Panc1 (cell line): ENCODE measurements at regions of chr9 and their contacts with region 1.

Region 1: DNA sequence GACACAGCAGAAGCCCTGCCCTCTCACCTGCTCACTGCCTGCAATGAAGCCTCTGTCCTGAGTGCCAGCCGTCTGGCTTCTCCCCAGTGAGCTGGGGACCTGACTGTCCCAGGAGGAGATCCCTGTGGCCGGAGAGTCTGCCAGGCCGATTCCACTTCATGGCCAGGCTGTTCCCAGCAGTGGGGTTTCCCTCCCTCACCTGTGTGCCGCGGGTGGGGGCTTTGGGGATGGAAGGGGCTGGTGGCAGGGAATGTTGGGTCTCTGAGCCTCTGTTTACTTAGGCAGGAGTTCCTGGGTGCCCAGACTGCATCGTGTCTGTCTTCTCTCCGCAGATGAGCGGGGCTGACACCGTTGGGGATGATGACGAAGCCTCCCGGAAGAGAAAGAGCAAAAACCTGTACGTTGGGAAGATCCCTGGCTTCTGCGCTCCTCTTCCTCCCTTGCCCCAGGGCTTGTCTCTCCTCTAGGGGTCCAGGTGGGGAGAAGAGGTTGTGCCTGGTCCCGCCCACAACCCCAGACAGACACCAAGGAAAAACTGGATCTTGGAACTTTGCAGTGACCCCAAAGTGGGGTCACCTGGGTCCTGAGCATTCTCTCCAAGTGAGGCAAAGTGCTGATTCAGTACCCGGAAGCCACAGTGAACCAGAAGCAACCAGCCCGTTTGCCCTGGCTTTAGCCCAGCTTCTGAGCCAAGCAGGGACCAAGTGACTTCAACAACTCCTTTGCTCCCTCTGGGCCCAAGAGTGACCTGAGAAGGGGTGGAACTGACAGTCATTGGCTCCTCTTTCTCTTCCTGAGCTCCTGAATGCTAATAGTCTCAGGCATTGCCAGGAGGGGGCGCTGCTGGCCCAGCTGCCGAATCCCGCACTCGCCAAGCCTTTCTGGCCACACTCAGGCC is 127.7 kb downstream of the RGS3 start:
- DNase-seq: no peak
- ATAC-seq: peak; percentile 72
- H3K4me3 ChIP-seq: no peak overlapping the region
- H3K27ac ChIP-seq: no peak overlapping the region
- H3K4me1 ChIP-seq: peaks cover 5% of the 10 kb centered on the region
- H3K27me3 ChIP-seq: no peaks in the 10 kb centered on the region
- CTCF ChIP-seq: peak; percentile 88

Region 2: DNA sequence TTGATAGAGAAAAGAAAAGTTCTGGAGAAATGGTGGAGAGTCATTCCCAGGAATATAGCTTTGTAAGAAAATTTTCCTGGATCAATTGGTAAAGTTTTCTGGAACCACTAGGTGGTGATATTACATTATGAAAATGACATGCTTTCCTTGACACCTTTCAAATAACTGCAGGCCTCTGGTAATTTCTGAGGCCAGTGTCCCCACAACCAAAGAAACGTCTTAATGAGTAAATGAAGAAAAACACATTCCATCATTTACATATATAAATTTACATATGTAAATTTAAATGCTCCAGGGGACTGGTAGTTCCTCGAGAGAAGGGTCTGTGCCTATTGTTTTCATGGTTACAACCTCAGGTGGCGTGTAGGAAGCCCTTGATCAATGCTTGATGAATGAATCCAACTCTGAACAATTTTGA is 144.9 kb before region 1 on chr9:
- CTCF ChIA-PET with region 1: interaction called, 4 read pairs
- POLR2A ChIA-PET with region 1: no interaction called
- in situ Hi-C with region 1: no loop called
- intact Hi-C with region 1: loop called (anchors 2 kb)
- DNase-seq: peak; percentile 25
- ATAC-seq: peak; percentile 51; the same call in 1 of the 2 replicates
- H3K4me3 ChIP-seq: no peak overlapping the region
- H3K27ac ChIP-seq: no peak overlapping the region
- H3K4me1 ChIP-seq: no peaks in the 10 kb centered on the region
- H3K27me3 ChIP-seq: no peaks in the 10 kb centered on the region
- CTCF ChIP-seq: peak; percentile 52; the same call in 1 of the 2 replicates

Region 3: GRCh38 chr9:113492343-113493212 is 98.7 kb before region 1 on chr9:
- CTCF ChIA-PET with region 1: no interaction called
- POLR2A ChIA-PET with region 1: no interaction called
- in situ Hi-C with region 1: no loop called
- intact Hi-C with region 1: no loop called
- DNase-seq: no peak
- ATAC-seq: no peak
- H3K4me3 ChIP-seq: no peak overlapping the region
- H3K27ac ChIP-seq: no peak overlapping the region
- H3K4me1 ChIP-seq: no peaks in the 10 kb centered on the region
- H3K27me3 ChIP-seq: no peaks in the 10 kb centered on the region
- CTCF ChIP-seq: no peak

Region 4: GRCh38 chr9:113541019-113541900 is 50.0 kb before region 1 on chr9:
- CTCF ChIA-PET with region 1: no interaction called
- POLR2A ChIA-PET with region 1: no interaction called
- in situ Hi-C with region 1: no loop called
- intact Hi-C with region 1: no loop called
- DNase-seq: no peak
- ATAC-seq: no peak; the same call in 1 of the 2 replicates
- H3K4me3 ChIP-seq: no peak overlapping the region
- H3K27ac ChIP-seq: no peak overlapping the region
- H3K4me1 ChIP-seq: no peaks in the 10 kb centered on the region
- H3K27me3 ChIP-seq: no peaks in the 10 kb centered on the region
- CTCF ChIP-seq: no peak

Region 5: DNA sequence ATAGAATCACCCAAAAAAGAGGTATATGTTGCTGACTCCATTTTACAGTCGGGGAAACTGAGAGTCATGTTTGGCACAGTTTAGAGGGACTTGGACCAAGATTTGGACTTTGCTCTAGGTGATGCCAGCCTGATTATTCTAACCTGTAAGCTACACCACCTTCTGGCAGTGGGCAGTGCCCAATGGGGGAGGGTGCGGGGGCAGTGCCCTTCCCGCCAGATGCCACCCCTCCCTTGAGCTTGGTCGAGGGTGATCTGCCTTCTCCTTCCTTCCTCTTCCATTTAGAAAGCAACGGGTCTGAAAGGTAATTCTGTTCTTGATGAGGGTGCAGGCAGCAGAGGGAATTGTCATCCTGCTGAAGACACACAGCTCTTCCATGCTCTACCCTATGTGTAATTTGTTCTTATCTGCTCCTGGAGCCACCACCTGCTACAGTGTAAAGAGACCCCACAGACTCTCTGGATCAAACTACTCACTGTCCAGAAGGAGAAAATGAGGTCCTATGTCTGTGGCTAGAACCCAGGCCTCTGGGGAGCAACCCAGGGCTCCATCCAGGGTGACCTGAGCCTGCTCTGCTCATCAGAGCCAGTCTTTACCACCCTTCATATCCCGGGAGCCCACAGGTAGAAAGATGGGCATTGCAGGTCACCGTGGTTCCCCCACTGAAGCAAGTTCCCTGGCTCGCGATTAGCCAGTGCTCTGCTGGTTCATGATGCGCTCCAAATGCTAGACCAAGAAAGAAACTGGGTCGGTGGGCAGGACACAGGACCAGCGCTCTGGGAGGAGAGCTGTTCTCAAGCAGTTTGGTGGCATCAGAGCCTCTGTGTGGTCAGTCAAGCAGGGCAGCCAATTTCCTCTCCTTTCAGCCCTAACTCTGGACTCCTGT is 28.5 kb after region 1 on chr9:
- CTCF ChIA-PET with region 1: no interaction called
- POLR2A ChIA-PET with region 1: interaction called, 13 read pairs
- in situ Hi-C with region 1: no loop called
- intact Hi-C with region 1: no loop called
- DNase-seq: no peak
- ATAC-seq: peak; percentile 42
- H3K4me3 ChIP-seq: no peak overlapping the region
- H3K27ac ChIP-seq: peak overlapping the region; percentile 54
- H3K4me1 ChIP-seq: peaks cover 16% of the 10 kb centered on the region
- H3K27me3 ChIP-seq: no peaks in the 10 kb centered on the region
- CTCF ChIP-seq: no peak

Region 6: GRCh38 chr9:113657703-113658544 is 66.7 kb after region 1 on chr9:
- CTCF ChIA-PET with region 1: interaction called, 65 read pairs
- POLR2A ChIA-PET with region 1: no interaction called
- in situ Hi-C with region 1: no loop called
- intact Hi-C with region 1: loop called (anchors 1 kb)
- DNase-seq: peak; percentile 69
- ATAC-seq: peak; percentile 93
- H3K4me3 ChIP-seq: no peak overlapping the region
- H3K27ac ChIP-seq: no peak overlapping the region
- H3K4me1 ChIP-seq: no peaks in the 10 kb centered on the region
- H3K27me3 ChIP-seq: no peaks in the 10 kb centered on the region
- CTCF ChIP-seq: peak; percentile 90

Region 7: GRCh38 chr9:113721856-113722255 is 130.6 kb after region 1 on chr9:
- CTCF ChIA-PET with region 1: no interaction called
- POLR2A ChIA-PET with region 1: no interaction called
- in situ Hi-C with region 1: no loop called
- intact Hi-C with region 1: no loop called
- DNase-seq: no peak
- ATAC-seq: no peak
- H3K4me3 ChIP-seq: no peak overlapping the region
- H3K27ac ChIP-seq: no peak overlapping the region
- H3K4me1 ChIP-seq: no peaks in the 10 kb centered on the region
- H3K27me3 ChIP-seq: no peaks in the 10 kb centered on the region
- CTCF ChIP-seq: no peak

Region 8: DNA sequence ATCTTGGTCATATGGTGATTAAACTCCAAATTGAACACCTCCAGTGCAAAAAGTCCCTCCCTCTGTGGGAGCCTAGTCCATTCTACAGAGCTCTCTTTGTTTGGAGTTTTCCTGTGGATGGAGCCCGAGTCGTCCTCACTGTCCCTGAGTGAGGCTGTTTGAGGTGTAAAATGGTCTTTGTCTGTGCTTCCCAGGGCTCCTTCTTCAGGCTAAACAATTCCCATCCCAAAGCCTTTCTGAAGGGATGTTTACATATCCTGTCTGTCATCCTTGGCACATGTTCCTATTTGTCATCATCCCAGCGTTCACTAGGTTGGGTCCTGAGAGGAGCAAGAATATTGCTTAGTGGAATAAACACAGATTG is 633.0 kb after region 1 on chr9:
- CTCF ChIA-PET with region 1: no interaction called
- POLR2A ChIA-PET with region 1: no interaction called
- in situ Hi-C with region 1: no loop called
- intact Hi-C with region 1: no loop called
- DNase-seq: peak; percentile 81
- ATAC-seq: peak; percentile 72
- H3K4me3 ChIP-seq: no peak overlapping the region
- H3K27ac ChIP-seq: no peak overlapping the region
- H3K4me1 ChIP-seq: no peaks in the 10 kb centered on the region
- H3K27me3 ChIP-seq: no peaks in the 10 kb centered on the region
- CTCF ChIP-seq: no peak